ENCODE measurements at regions of chr3 and their contacts with region 1.

Region 1: DNA sequence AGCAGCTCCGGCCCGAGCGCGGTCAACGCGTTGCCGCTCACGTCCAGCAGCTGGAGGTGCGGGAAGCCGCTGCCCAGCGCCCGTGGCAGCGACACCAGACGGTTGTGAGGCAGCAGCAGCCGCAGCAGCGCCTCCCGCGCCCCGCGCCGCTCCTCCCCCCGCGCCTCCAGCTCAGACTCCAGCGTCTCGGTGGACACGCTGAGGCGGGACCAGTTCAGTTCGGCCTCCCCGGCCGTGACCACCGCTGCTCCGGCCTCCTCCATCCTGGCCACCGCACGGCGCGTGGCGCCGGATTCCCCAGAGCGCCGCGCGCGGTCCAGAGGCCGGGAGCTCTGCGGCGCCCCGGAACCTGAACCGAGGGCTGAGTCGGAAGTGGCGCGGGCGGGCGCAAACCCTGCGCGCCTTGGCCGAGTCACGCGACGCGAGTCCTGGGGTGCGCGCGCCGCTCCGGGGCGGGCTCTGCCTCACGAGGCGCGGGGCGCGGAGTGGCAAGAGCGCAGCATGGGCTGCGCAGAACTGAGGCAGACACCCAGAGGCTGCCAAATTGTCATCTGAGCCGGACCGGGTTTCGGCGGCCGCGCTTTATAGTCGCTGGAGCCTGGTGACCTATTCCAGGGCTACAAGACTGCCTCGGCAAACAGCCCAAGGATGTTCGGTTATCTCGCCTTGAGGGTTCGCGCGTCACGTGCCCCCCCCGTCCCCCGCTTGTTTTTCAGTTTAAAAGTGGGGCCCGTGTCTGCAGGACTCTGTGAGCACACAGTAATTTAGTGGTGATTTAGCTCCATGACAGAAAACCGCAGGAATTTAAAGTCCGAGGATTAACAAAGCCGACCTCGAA is at the start of gene LRRC58:
- DNase-seq: peak; percentile 85
- H3K4me3 Mint-ChIP-seq: peak within 1 kb of the TSS; percentile 89
- H3K27ac Mint-ChIP-seq: peak within 1 kb of the TSS; percentile 89
- H3K4me1 Mint-ChIP-seq: peaks cover 40% of the 10 kb centered on the region
- H3K27me3 Mint-ChIP-seq: no peaks in the 10 kb centered on the region
- total RNA-seq, gene LRRC58: 17.6 to 18.0 TPM

Region 2: DNA sequence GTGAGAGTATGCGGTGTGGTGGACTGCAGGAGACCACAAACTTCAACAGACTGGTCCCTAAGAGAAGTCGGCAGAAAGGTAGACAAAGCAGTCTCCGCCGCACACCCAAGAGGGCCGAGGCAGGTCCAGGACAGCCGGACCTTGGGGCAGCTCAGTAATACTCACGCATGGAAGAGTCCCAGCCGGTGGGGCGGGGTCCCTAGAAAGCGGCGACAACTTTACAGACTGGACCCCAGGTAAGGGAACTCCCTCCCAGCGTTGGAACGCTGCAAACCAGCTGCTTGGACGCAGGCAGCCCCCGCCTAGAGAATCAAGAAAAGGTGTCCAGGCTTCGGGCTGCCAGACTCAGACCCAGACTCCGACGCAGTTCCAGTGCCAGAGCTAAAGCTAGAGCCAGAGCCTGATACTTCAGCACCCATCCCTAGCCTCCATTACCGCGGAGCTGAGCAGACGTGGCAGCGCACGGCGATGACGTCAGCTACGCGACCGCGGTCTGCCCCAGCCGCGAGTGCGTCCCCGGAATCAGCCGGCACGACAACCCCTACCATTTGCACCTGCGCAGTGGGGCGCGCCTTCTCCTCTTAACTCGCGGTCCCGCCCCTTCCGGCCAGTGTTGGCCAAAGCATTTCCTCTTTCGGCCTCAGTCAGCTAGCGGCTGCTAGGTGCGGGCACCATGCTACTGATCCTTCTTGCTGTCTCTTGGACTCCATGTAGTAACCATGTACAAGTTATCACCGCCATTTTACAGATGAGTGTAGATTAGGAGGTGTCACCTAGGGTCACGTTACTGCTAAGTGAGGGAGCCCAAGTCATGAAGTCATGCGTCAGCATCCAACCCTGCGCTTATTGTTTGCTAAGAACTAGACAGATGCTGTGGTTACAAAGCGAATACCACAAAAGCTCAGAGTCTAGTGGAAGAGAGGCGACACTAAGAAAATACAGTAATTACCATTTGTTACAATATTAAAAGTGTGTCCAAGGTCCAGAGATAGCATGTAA is 885.7 kb before region 1 on chr3 and contains the start of gene TMEM39A:
- CTCF ChIA-PET with region 1: no interaction called
- intact Hi-C with region 1: loop called (anchors 10 kb)
- DNase-seq: peak; percentile 98
- H3K4me3 Mint-ChIP-seq: peak within 1 kb of the TSS; percentile 96
- H3K27ac Mint-ChIP-seq: peak within 1 kb of the TSS; percentile 90
- H3K4me1 Mint-ChIP-seq: peaks cover 32% of the 10 kb centered on the region
- H3K27me3 Mint-ChIP-seq: no peaks in the 10 kb centered on the region
- total RNA-seq, gene TMEM39A: 21.4 to 26.9 TPM

Region 3: DNA sequence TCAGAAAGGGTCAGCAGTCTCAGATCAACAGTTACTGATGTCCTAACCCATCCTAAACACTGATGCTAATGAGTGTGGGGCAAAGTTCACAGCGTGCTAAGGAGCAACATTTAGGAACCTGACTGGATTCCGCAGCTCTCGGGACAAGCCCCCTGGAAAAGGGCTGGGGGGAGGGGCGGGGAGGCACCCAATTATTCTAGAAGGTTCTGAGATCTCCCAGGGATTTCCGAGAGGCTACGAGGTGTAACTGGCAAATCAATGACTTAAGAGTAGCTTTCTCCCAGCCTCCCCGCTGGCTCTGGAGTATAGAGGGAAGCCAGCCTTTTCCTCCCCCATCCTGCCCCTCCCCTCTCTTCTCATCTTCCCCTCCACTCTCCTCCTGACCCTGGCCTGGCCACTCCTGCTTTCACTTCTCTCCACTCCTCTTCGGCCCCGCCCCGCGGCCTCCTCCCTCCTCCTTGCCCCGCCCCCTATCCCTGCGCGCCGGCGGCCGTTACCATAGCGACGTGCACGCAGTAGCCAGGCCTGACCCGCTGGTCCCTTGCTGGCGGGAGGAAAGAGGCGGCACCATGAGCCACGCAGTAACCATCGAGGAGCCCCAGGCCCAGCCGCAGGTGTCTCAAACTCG is 646.6 kb before region 1 on chr3 and contains the start of gene CFAP91:
- CTCF ChIA-PET with region 1: no interaction called
- intact Hi-C with region 1: loop called (anchors 5 kb)
- DNase-seq: peak; percentile 83
- H3K4me3 Mint-ChIP-seq: peak within 1 kb of the TSS; percentile 72
- H3K27ac Mint-ChIP-seq: no peak within 1 kb of the TSS
- H3K4me1 Mint-ChIP-seq: peaks cover 45% of the 10 kb centered on the region
- H3K27me3 Mint-ChIP-seq: peaks cover 2% of the 10 kb centered on the region
- total RNA-seq, gene CFAP91: 0.26 to 0.57 TPM

Region 4: DNA sequence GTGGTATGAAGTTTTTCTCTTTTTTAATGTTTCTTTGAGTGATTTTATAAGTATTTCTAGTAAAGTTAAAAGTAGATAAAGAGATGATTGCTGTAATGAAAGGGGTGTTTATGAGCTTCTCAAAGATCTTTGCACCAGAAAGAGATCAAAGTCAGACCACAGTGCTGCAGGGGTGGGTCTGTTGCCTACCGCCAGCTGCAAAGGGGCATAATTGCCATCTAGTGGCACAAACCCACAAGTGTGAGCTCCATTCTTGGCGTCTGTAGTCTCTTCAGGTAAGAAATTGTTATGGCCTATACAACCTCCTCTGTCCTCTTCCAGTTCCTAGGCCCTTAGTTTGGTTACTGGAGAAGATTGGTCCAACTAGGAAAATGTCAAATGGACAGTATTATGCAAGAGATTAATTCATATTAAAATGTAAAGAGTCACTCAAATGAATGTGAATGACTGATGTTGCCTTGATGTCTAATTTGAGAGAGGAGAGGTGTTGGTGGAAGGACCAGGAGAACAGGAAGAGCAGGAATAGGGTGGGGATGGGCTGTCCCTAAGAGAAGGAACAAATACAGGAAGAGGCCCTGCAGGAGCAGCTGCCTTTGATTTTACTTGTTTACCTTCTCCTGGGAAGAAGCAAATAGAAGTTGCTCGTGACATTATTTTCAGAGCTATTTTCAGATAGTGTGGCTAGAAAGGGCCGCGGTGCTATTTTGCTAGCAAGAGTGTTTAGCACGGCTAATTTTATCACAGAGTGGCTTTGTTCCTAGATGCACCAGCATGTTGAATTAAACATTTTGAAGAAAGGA is 201.9 kb before region 1 on chr3:
- CTCF ChIA-PET with region 1: no interaction called
- intact Hi-C with region 1: loop called (anchors 2 kb)
- DNase-seq: peak; percentile 61
- H3K4me3 Mint-ChIP-seq: no peak overlapping the region
- H3K27ac Mint-ChIP-seq: no peak overlapping the region
- H3K4me1 Mint-ChIP-seq: peaks cover 25% of the 10 kb centered on the region
- H3K27me3 Mint-ChIP-seq: no peaks in the 10 kb centered on the region

Region 5: DNA sequence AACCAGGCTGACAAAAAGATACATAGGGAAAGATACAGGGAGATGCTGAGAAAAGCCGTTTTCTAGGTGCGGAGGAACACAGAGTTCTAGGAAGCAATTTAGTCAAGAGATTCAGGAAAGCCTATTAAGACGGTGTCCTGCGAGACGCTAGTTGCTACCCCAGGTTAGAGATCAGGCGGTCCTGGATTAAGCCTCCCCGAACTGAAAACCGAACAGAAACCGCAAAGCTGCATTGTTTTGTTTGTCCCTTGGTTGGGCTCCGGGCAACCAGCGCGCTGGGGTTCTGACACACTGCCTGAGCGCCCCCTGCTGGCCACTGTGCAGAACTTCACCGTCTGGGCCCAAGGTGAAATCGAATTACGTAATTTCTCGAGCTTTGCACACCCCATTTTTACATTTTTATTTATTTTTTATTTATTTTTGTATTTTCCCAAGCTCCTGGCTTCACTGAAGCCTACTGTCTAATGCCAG is 209.6 kb after region 1 on chr3:
- CTCF ChIA-PET with region 1: interaction called, 3 read pairs
- intact Hi-C with region 1: loop called (anchors 2 kb)
- DNase-seq: peak; percentile 91
- H3K4me3 Mint-ChIP-seq: peak overlapping the region; percentile 72
- H3K27ac Mint-ChIP-seq: no peak overlapping the region
- H3K4me1 Mint-ChIP-seq: peaks cover 19% of the 10 kb centered on the region
- H3K27me3 Mint-ChIP-seq: peaks cover 8% of the 10 kb centered on the region

Measured in activated naive CD4-positive, alpha-beta T cell treated with anti-CD3 and anti-CD28 coated beads for 36 hours (primary cell).